Pancreas (tissue), 10 donors: ENCODE measurements at regions of chr2 and their contacts with region 1.

Region 1: GRCh38 chr2:64644177-64645004 is 9.3 kb downstream of the SERTAD2 start:
- DNase-seq: peak in 5 of 6 donors; percentile 38 to 69 (median 45)
- ATAC-seq: peak; percentile 37 to 84 (median 66)
- H3K4me3 ChIP-seq: peak overlapping the region in 2 of 4 donors; percentile 23 to 27
- H3K27ac ChIP-seq: peak overlapping the region; percentile 36 to 88 (median 75)
- H3K4me1 ChIP-seq: peaks cover 16 to 52% (median 38%) of the 10 kb centered on the region in 3 donors
- H3K27me3 ChIP-seq: no peaks in the 10 kb centered on the region
- CTCF ChIP-seq: no peak

Region 2: DNA sequence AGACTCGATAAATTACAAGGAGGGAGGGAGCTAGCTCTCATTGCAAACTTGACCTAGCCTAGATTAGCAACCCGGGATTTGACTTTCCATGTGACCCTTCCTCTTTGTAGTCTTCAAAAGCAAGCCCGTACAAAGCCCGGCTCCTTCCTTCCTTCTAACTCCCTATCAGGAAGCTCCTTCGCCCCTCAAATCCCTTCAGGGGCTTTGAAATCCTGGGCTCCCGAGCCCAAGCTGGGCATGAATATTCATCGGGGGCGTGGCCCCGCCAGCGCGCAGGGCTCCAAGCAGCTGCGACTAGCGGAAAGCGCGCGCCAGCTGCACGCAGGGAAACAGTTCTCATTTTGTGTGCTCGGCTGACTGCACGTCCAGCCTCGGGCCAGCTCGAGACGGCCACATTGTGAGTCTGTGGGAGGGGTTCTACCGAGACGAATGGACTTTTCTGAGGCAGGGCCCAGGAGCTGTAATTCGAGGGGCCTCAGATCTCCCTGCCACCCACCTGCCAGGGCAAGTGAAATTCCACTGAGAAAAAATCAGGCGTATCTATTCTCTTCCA is 416.2 kb before region 1 on chr2:
- intact Hi-C with region 1: no loop called
- DNase-seq: peak; percentile 62 to 89 (median 75)
- ATAC-seq: peak; percentile 98 to 100 (median 99)
- H3K4me3 ChIP-seq: peak overlapping the region; percentile 12 to 43 (median 23)
- H3K27ac ChIP-seq: peak overlapping the region in 2 of 4 donors; percentile 7 to 20
- H3K4me1 ChIP-seq: peaks cover 0 to 5% (median 0%) of the 10 kb centered on the region in 3 donors
- H3K27me3 ChIP-seq: no peaks in the 10 kb centered on the region
- CTCF ChIP-seq: no peak

Region 3: GRCh38 chr2:64831134-64831976 is 187.0 kb after region 1 on chr2:
- intact Hi-C with region 1: loop called in 1 of 3 experiments (anchors 10 kb)
- DNase-seq: peak; percentile 66 to 86 (median 79)
- ATAC-seq: peak; percentile 89 to 95 (median 94)
- H3K4me3 ChIP-seq: no peak overlapping the region
- H3K27ac ChIP-seq: peak overlapping the region in 2 of 4 donors; percentile 42 to 70
- H3K4me1 ChIP-seq: peaks cover 0 to 8% (median 4%) of the 10 kb centered on the region in 3 donors
- H3K27me3 ChIP-seq: no peaks in the 10 kb centered on the region
- CTCF ChIP-seq: peak; percentile 76 to 90 (median 82)